ENCODE measurements at regions of chr7 and their contacts with region 1.

Region 1: DNA sequence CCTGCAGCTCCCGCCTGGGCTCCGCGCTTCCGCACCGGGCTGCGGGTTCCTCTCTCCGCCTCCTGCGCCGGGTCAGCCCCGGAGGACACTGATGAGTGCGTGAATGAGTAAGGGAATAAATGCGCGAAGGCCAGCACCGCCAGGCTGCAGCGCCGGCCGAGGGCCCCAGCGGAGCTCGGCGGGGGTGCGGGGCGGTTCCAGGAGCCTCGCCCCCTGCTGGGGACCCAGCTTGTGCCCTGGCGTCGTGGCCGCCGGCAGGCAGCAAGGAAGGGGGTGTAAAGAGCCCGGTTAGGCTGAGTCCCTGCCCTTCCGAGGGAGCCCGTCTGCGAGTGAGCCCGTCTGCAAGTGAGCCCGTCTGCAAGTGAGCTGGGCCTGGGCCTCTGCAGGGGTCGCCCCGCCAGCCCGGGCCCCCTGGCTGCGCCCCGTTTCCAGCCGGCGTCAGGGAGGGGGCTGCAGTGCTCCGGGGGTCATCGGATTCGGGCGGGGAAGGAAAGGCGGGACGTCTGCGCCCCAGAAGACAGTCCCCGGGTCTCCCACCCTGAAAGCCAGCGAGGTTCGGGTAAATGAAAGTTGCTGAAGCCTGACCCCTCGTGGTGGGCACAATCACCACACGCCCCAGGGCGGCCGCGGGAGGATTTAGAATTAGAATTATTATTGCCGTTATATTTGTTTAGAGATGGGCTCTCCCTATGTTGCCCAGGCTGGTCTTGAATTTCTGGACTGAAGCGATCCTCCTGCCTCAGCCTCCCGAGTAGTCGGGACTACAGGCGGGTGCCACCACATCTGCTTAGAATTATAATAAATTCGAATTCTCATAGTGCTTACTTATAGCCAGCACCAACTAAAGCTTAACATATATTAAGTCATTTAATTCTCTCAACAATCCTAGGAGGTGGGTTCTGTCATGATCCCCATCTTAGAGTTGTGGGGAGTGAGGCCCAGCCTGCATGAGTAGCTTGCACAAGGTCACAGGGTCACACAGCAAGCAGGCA is 8.6 kb upstream of the CRYGN start:
- DNase-seq: peak; percentile 86
- ATAC-seq: peak; percentile 94
- H3K4me3 Mint-ChIP-seq: peak overlapping the region; percentile 59
- H3K27ac Mint-ChIP-seq: peak overlapping the region; percentile 64
- H3K4me1 Mint-ChIP-seq: peaks cover 13% of the 10 kb centered on the region
- H3K27me3 Mint-ChIP-seq: peaks cover 6% of the 10 kb centered on the region

Region 2: DNA sequence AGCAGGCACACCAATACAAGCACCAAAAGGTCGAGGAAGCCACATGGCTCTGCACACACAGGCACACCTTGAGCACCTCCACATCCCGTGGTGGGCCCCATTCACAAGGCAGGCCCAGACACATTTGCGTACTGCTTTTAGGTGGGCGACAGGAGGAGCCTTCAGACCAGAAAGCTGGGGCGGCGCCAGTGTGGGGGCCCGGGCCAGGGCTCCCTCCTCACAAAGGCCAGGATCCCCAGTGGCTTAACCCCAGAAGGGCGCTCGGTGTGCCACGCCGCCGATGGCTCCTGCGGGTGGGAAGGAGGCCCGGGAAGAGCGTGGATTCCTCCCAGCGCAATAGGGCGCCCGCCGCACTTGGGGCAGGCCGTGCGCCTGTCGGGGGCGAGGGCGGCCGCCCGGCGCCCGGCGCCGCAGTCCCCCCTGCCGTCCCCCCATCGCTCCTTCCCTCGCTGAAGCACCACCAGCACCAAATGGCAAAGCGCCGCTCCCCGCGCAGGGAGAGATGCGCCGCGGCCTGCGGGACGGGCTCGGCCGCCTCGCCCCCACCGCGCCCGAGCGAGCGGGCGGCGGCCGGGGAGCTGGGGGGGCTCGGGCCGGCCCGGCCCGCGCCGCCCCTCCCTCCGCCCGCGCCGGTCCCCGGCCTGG is 197.1 kb before region 1 on chr7:
- CTCF ChIA-PET with region 1: no interaction called
- POLR2A ChIA-PET with region 1: no interaction called
- DNase-seq: no peak
- ATAC-seq: peak; percentile 24
- H3K4me3 Mint-ChIP-seq: no peak overlapping the region
- H3K27ac Mint-ChIP-seq: no peak overlapping the region
- H3K4me1 Mint-ChIP-seq: peaks cover 19% of the 10 kb centered on the region
- H3K27me3 Mint-ChIP-seq: peaks cover 71% of the 10 kb centered on the region

Region 3: DNA sequence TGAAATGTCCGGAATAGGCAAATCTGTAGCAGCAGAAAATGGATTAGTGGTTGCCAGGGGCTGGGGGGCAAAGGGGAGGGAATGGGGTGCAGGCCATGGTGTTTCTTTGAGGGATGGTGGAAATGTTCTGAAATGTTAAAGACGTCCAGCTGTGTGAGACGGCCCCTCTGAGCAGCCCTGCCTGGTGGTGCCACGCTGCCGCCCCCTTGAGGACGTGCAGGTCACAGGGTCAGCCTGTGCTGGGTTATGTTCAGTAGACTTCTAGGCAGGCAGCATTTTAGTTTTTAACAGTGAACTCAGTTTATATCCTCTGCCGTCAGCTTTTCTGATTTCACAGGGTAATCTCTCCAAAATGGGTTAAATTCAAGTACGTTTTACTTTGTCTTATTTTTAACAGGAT is 97.5 kb before region 1 on chr7:
- CTCF ChIA-PET with region 1: interaction called, 90 read pairs
- POLR2A ChIA-PET with region 1: interaction called, 7 read pairs
- DNase-seq: peak; percentile 63
- ATAC-seq: no peak
- H3K4me3 Mint-ChIP-seq: peak overlapping the region; percentile 51
- H3K27ac Mint-ChIP-seq: peak overlapping the region; percentile 90
- H3K4me1 Mint-ChIP-seq: peaks cover 47% of the 10 kb centered on the region
- H3K27me3 Mint-ChIP-seq: no peaks in the 10 kb centered on the region

Region 4: GRCh38 chr7:151382079-151382885 is 66.3 kb before region 1 on chr7:
- CTCF ChIA-PET with region 1: interaction called, 22 read pairs
- POLR2A ChIA-PET with region 1: no interaction called
- DNase-seq: no peak
- ATAC-seq: peak; percentile 50
- H3K4me3 Mint-ChIP-seq: peak overlapping the region; percentile 44
- H3K27ac Mint-ChIP-seq: no peak overlapping the region
- H3K4me1 Mint-ChIP-seq: peaks cover 12% of the 10 kb centered on the region
- H3K27me3 Mint-ChIP-seq: peaks cover 21% of the 10 kb centered on the region

Region 5: GRCh38 chr7:151459726-151460473 is 11.3 kb after region 1 on chr7:
- CTCF ChIA-PET with region 1: interaction called, 31 read pairs
- POLR2A ChIA-PET with region 1: no interaction called
- DNase-seq: no peak
- ATAC-seq: no peak
- H3K4me3 Mint-ChIP-seq: no peak overlapping the region
- H3K27ac Mint-ChIP-seq: no peak overlapping the region
- H3K4me1 Mint-ChIP-seq: peaks cover 6% of the 10 kb centered on the region
- H3K27me3 Mint-ChIP-seq: peaks cover 12% of the 10 kb centered on the region

Region 6: DNA sequence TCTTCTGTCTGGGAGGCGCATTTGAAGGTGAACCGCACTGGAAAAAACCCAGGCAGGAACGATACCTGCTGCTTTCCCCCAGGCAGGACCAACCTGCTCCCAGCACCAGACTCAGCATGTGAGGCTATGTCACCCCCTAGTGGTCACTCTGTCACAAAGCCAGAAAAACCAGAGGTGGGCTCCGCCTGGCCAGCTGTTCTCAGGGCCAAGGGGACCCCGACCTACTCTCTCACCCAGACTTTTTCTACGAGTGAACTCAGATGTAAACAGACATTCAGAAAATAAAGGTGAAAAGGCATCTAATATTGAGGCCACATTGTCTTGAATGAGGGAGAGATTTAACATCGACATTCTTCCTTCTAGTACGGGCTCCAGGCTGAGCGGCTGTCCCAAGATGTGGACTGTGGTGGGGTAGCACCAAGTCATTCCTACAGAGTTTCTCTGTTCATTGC is 311.1 kb after region 1 on chr7:
- CTCF ChIA-PET with region 1: interaction called, 10 read pairs
- POLR2A ChIA-PET with region 1: no interaction called
- DNase-seq: peak; percentile 75
- ATAC-seq: peak; percentile 59
- H3K4me3 Mint-ChIP-seq: no peak overlapping the region
- H3K27ac Mint-ChIP-seq: peak overlapping the region; percentile 49
- H3K4me1 Mint-ChIP-seq: peaks cover 35% of the 10 kb centered on the region
- H3K27me3 Mint-ChIP-seq: no peaks in the 10 kb centered on the region